Activated CD8-positive, alpha-beta T cell treated with anti-CD3 and anti-CD28 coated beads, Interleukin-2, amount 10 ng/mL, durations not matched to agents 7 days and 5 days (primary cell): ENCODE measurements at regions of chr10 and their contacts with region 1.

Region 1: DNA sequence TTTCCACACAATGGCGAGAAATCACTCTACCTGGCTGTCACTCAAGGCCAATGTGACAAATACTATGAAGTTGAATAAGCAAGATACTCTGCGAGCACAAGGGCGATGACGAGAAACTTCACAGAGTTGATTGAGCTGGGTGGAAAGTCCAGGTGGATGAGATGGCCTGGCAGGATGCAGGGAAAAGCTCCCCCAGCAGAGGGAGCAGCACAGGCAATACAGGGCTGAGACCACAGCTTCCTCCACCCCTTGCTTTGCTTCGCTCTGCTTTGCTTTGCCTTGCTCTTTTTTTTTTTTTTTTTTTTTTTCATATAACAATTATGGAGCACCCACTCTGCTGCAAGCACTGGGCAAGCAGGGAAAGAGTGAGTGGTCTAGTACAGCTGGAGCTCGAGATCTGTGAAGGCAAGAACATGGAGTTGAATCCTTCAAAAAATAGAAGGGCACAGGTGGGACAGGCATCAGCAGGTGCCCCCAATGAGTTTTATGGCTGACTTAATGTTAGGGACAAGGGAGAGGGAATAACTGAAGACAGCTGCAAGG is 88.3 kb downstream of the CABCOCO1 start:
- DNase-seq: peak; percentile 82
- ATAC-seq: peak; percentile 88
- H3K4me3 Mint-ChIP-seq: peak overlapping the region; percentile 18
- H3K27ac Mint-ChIP-seq: peak overlapping the region; percentile 85
- H3K4me1 Mint-ChIP-seq: peaks cover 29% of the 10 kb centered on the region
- H3K27me3 Mint-ChIP-seq: no peaks in the 10 kb centered on the region

Region 2: GRCh38 chr10:61628875-61629513 is 122.0 kb before region 1 on chr10:
- CTCF ChIA-PET with region 1: no interaction called
- POLR2A ChIA-PET with region 1: no interaction called
- DNase-seq: no peak
- ATAC-seq: no peak
- H3K4me3 Mint-ChIP-seq: no peak overlapping the region
- H3K27ac Mint-ChIP-seq: no peak overlapping the region
- H3K4me1 Mint-ChIP-seq: no peaks in the 10 kb centered on the region
- H3K27me3 Mint-ChIP-seq: peaks cover 2% of the 10 kb centered on the region

Region 3: DNA sequence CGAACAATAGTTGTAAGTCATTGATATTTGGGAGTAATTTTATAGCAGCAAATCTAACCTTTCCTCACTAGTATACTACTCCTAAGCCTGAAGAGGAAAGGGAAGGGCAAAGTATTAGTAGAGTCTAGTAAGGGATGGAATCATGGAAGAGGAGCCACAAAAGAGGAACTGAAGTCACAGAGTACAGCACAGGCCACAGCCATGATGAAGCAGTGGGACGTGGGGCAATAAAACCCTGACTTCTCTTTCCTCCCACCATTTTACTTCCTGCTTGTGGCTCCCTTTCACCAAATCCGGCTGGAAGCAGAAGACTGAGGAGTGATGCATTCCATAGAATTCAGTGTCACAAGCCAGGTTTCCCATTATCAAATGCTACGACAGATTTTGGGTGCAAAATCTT is 29.6 kb before region 1 on chr10:
- CTCF ChIA-PET with region 1: no interaction called
- POLR2A ChIA-PET with region 1: no interaction called
- DNase-seq: no peak
- ATAC-seq: no peak
- H3K4me3 Mint-ChIP-seq: no peak overlapping the region
- H3K27ac Mint-ChIP-seq: no peak overlapping the region
- H3K4me1 Mint-ChIP-seq: no peaks in the 10 kb centered on the region
- H3K27me3 Mint-ChIP-seq: peaks cover 2% of the 10 kb centered on the region

Region 4: GRCh38 chr10:61735879-61736278 is 15.1 kb before region 1 on chr10:
- CTCF ChIA-PET with region 1: interaction called, 18 read pairs
- POLR2A ChIA-PET with region 1: no interaction called
- DNase-seq: no peak
- ATAC-seq: no peak
- H3K4me3 Mint-ChIP-seq: no peak overlapping the region
- H3K27ac Mint-ChIP-seq: no peak overlapping the region
- H3K4me1 Mint-ChIP-seq: no peaks in the 10 kb centered on the region
- H3K27me3 Mint-ChIP-seq: peaks cover 19% of the 10 kb centered on the region

Region 5: GRCh38 chr10:61765176-61766087 is 14.4 kb after region 1 on chr10:
- CTCF ChIA-PET with region 1: interaction called, 13 read pairs
- POLR2A ChIA-PET with region 1: interaction called, 3 read pairs
- DNase-seq: no peak
- ATAC-seq: peak; percentile 71
- H3K4me3 Mint-ChIP-seq: no peak overlapping the region
- H3K27ac Mint-ChIP-seq: peak overlapping the region; percentile 64
- H3K4me1 Mint-ChIP-seq: peaks cover 10% of the 10 kb centered on the region
- H3K27me3 Mint-ChIP-seq: no peaks in the 10 kb centered on the region

Region 6: DNA sequence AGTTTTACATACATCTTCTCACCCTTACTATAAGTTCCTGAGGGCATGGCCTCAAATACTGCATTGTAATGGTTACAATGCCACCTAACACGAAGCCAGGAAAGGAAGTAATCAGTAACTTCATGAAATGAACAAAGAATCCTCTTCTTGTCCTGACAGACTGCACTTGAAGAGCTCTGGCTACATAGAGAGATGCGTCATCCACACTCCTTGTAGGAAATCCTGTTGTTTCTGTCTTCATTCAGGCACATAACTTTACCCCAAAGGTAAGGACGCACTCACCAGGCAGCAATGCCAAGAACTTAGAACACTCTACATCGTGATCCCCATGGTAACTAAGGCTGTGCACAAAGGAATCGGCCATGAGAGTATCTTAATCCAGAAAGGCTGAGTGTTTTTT is 70.2 kb after region 1 on chr10:
- CTCF ChIA-PET with region 1: interaction called, 31 read pairs
- POLR2A ChIA-PET with region 1: no interaction called
- DNase-seq: no peak
- ATAC-seq: no peak
- H3K4me3 Mint-ChIP-seq: no peak overlapping the region
- H3K27ac Mint-ChIP-seq: no peak overlapping the region
- H3K4me1 Mint-ChIP-seq: peaks cover 3% of the 10 kb centered on the region
- H3K27me3 Mint-ChIP-seq: no peaks in the 10 kb centered on the region

Region 7: DNA sequence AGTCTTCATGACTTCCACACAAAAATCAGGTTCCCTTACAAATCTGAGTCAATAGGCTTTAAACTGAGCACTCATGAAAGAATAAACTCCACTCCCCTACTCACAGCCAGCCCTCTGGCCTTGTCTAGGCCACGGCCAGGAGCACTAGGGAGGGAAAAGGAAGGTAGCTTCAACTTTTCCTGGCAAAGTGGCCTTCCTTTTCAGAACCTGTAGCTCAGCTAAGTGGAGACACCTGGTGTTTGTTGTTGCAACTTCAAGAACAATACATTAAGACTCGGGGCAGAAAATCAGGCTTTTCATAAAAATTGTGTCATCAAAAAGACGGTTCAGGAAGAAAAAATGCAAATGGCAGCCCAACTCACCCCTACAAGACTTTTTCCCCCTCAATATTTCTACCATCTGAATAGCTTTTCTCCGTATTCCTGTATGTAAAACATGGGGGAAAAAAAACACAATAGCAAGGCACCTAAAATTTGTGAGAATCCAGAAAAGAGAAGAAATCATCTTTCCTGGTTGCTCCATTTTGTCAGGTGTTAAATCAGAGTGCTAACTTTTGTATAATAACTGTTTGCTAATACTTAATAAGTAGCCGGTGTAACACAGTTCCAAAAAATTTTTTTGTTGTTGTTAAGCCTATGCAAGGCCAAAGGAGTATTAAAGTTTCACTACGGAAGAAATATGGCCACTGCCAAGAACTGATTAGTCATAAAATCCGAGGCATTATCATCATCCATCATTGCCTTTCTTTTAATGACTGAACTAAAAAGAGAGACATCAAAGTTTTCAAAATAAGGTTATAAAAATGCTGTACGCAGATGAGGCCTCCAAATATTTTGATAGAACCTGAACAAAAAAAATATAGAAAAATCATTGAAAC is 84.3 kb after region 1 on chr10:
- CTCF ChIA-PET with region 1: interaction called, 89 read pairs
- POLR2A ChIA-PET with region 1: interaction called, 3 read pairs
- DNase-seq: no peak
- ATAC-seq: no peak
- H3K4me3 Mint-ChIP-seq: no peak overlapping the region
- H3K27ac Mint-ChIP-seq: no peak overlapping the region
- H3K4me1 Mint-ChIP-seq: peaks cover 4% of the 10 kb centered on the region
- H3K27me3 Mint-ChIP-seq: no peaks in the 10 kb centered on the region

Region 8: GRCh38 chr10:61866700-61867368 is 115.8 kb after region 1 on chr10:
- CTCF ChIA-PET with region 1: interaction called, 24 read pairs
- POLR2A ChIA-PET with region 1: interaction called, 3 read pairs
- DNase-seq: no peak
- ATAC-seq: no peak
- H3K4me3 Mint-ChIP-seq: no peak overlapping the region
- H3K27ac Mint-ChIP-seq: peak overlapping the region; percentile 60
- H3K4me1 Mint-ChIP-seq: peaks cover 13% of the 10 kb centered on the region
- H3K27me3 Mint-ChIP-seq: peaks cover 4% of the 10 kb centered on the region